ENCODE measurements at regions of chr1 and their contacts with region 1.

Region 1: DNA sequence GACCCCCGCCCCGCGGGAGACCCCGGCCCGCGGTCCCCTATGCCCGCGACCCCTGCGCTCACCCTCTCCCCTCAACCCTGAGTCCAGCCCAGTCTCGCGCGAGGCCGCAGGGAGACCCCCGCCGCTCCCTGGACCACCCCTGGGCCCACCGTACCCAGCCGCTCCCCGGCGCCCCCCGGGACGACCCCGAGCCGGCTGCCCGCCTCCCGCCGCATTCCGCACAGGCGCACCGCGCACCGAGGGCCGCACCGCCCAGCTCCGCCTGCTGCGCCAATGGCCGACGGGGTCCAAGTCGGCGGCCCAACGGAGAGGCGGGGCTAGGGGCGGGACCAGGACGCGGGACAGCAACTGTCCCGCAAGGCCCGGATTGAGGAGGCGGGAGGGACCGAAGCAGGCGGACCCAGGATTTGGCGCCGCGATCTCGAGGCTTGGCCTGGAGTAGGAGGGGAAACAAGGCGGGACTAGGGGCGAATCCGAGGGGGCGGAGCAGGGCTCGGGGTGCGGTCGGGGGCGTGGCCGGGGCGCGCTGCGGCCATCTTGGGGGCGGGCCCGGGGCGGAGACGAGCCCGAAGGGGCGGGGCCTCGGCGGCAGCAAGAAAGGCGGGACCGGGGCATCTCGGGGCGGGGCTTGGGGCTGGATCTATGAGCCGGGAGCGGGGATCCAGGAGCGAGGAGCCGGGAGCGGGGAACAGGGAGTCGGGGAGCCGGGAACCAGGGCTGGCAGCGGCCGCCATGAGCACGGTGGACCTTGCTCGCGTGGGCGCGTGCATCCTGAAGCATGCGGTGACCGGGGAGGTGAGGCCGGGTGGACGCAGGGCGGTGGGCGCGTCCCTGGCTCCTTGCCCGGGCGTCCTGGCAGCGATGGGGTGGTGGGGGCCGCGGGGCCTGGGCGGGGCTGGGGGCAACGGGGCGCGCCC is at the start of gene PRXL2B:
- DNase-seq: peak; percentile 96 to 98
- H3K4me3 ChIP-seq: peak within 1 kb of the TSS; percentile 76
- H3K4me3 Mint-ChIP-seq: peak within 1 kb of the TSS; percentile 79
- H3K27ac Mint-ChIP-seq: peak within 1 kb of the TSS; percentile 79
- H3K4me1 ChIP-seq: peaks cover 6% of the 10 kb centered on the region; the same call in 1 of the 2 replicates
- H3K4me1 Mint-ChIP-seq: no peaks in the 10 kb centered on the region
- H3K27me3 ChIP-seq: no peaks in the 10 kb centered on the region
- H3K27me3 Mint-ChIP-seq: no peaks in the 10 kb centered on the region
- CTCF ChIP-seq: no peak
- total RNA-seq, gene PRXL2B: 16.2 and 16.8 TPM in 2 replicates

Region 2: GRCh38 chr1:2525920-2526823 is 60.2 kb before region 1 on chr1 and contains the start of gene PANK4:
- CTCF ChIA-PET with region 1: interaction called, 6 read pairs
- POLR2A ChIA-PET with region 1: interaction called, 10 read pairs
- intact Hi-C with region 1: loop called (anchors 5 kb)
- DNase-seq: peak; percentile 88 to 90
- H3K4me3 ChIP-seq: peak within 1 kb of the TSS; percentile 65
- H3K4me3 Mint-ChIP-seq: peak within 1 kb of the TSS; percentile 81
- H3K27ac Mint-ChIP-seq: peak within 1 kb of the TSS; percentile 69
- H3K4me1 ChIP-seq: 0 out of 2 replicates have a peak, but pooled peaks cover 3% of the 10 kb centered on the region
- H3K4me1 Mint-ChIP-seq: no peaks in the 10 kb centered on the region
- H3K27me3 ChIP-seq: peaks cover 2% of the 10 kb centered on the region
- H3K27me3 Mint-ChIP-seq: peaks cover 4% of the 10 kb centered on the region
- CTCF ChIP-seq: no peak
- total RNA-seq, gene PANK4: 27.0 and 31.7 TPM in 2 replicates

Region 3: DNA sequence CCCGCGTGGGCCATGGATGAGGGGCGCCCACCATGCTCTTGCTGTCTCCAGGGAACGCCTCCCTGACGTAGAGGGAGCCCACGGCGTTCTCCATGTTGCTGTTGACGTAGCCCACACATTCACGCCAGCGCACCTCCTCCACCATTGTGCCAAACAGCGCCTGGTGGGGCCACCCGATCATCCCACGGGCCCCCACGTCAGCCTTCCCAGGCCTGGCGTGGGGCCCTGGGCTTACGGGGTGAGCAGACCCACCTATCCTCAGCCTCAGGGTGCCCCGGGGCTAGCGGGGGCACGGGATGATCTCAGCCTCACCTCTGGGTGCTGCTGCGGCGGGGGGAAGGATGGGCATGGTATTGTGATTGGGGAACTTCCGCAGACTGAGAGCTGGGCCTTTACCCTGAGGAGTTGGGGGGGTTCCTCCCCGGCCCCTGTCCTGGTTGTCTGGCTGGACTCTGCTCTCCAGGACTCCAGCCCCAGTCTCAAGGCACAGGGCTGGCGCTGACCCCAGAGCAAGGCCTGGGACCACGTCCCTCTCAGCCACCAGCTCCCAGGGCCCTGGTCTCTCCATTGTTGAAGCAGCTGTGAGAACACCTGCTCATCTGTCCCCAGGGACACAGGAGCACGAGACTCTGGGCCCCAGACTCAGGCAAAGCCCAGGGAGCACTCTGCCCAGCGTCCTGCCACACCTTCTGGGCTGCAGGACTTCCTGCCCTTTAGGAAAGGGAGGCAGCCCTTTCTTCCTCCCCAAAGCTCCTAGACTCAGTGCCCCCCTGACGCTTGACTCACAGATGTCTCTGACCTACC is 10.3 kb after region 1 on chr1:
- CTCF ChIA-PET with region 1: no interaction called
- POLR2A ChIA-PET with region 1: no interaction called
- intact Hi-C with region 1: no loop called
- DNase-seq: no peak
- H3K4me3 ChIP-seq: no peak overlapping the region
- H3K4me3 Mint-ChIP-seq: no peak overlapping the region
- H3K27ac Mint-ChIP-seq: no peak overlapping the region
- H3K4me1 ChIP-seq: no peaks in the 10 kb centered on the region
- H3K4me1 Mint-ChIP-seq: no peaks in the 10 kb centered on the region
- H3K27me3 ChIP-seq: no peaks in the 10 kb centered on the region
- H3K27me3 Mint-ChIP-seq: peaks cover 6% of the 10 kb centered on the region
- CTCF ChIP-seq: no peak

Region 4: GRCh38 chr1:2642560-2643413 is 56.4 kb after region 1 on chr1:
- CTCF ChIA-PET with region 1: no interaction called
- POLR2A ChIA-PET with region 1: no interaction called
- intact Hi-C with region 1: loop called (anchors 2 kb)
- DNase-seq: peak; percentile 90
- H3K4me3 ChIP-seq: peak overlapping the region; percentile 81
- H3K4me3 Mint-ChIP-seq: peak overlapping the region; percentile 82
- H3K27ac Mint-ChIP-seq: no peak overlapping the region
- H3K4me1 ChIP-seq: no peaks in the 10 kb centered on the region
- H3K4me1 Mint-ChIP-seq: no peaks in the 10 kb centered on the region
- H3K27me3 ChIP-seq: no peaks in the 10 kb centered on the region
- H3K27me3 Mint-ChIP-seq: no peaks in the 10 kb centered on the region
- CTCF ChIP-seq: peak in 1 of 2 experiments; percentile 17

Measured in Caco-2 (cell line).